ENCODE measurements at regions of chr9 and their contacts with region 1.

Region 1: GRCh38 chr9:129139993-129140396 is 28.8 kb downstream of the PTPA start:
- DNase-seq: peak; percentile 59 to 95 (median 86)
- H3K4me3 ChIP-seq: peak overlapping the region; percentile 13 to 66 (median 47)
- H3K27ac ChIP-seq: peak overlapping the region; percentile 98 to 100 (median 100)
- H3K27me3 ChIP-seq: no peaks in the 10 kb centered on the region
- CTCF ChIP-seq: peak in 16 of 56 donors; percentile 6 to 38 (median 17)

Region 2: GRCh38 chr9:129487642-129488409 is 347.8 kb after region 1 on chr9:
- intact Hi-C with region 1: loop called in 1 of 2 experiments (anchors 5 kb)
- DNase-seq: peak in 5 of 10 donors; percentile 40 to 65 (median 58)
- H3K4me3 ChIP-seq: peak overlapping the region; percentile 34 to 74 (median 60)
- H3K27ac ChIP-seq: peak overlapping the region; percentile 81 to 100 (median 99)
- H3K27me3 ChIP-seq: no peaks in the 10 kb centered on the region
- CTCF ChIP-seq: no peak

Region 3: GRCh38 chr9:129626079-129626624 is 486.2 kb after region 1 on chr9 and contains the start of gene NTMT1:
- intact Hi-C with region 1: loop called in 1 of 2 experiments (anchors 5 kb)
- DNase-seq: peak; percentile 90 to 96 (median 94)
- H3K4me3 ChIP-seq: peak within 1 kb of the TSS; percentile 58 to 99 (median 89)
- H3K27ac ChIP-seq: peak within 1 kb of the TSS; percentile 40 to 98 (median 90)
- H3K27me3 ChIP-seq: no peaks in the 10 kb centered on the region
- CTCF ChIP-seq: peak in 29 of 56 donors; percentile 6 to 59 (median 28)
- total RNA-seq, gene NTMT1: 22.2 to 45.4 (median 32.9) TPM